Dendritic cell treated with granulocyte-macrophage colony-stimulating factor and Interleukin-4, amounts not matched to agents 40 ng/mL and 50 ng/mL, for 4 days (primary cell): ENCODE measurements at regions of chr3 and their contacts with region 1.

Region 1: GRCh38 chr3:193572426-193572908 is 17.8 kb upstream of the ATP13A4 start:
- H3K4me3 Mint-ChIP-seq: no peak overlapping the region
- H3K27ac Mint-ChIP-seq: no peak overlapping the region
- H3K4me1 Mint-ChIP-seq: peaks cover 5% of the 10 kb centered on the region
- H3K27me3 Mint-ChIP-seq: peaks cover 5% of the 10 kb centered on the region

Region 2: GRCh38 chr3:192467230-192468140 is 1105.0 kb before region 1 on chr3:
- intact Hi-C with region 1: loop called (anchors 5 kb)
- H3K4me3 Mint-ChIP-seq: no peak overlapping the region
- H3K27ac Mint-ChIP-seq: no peak overlapping the region
- H3K4me1 Mint-ChIP-seq: no peaks in the 10 kb centered on the region
- H3K27me3 Mint-ChIP-seq: peaks cover 4% of the 10 kb centered on the region

Region 3: GRCh38 chr3:192566706-192567290 is 1005.7 kb before region 1 on chr3:
- intact Hi-C with region 1: loop called (anchors 5 kb)
- H3K4me3 Mint-ChIP-seq: no peak overlapping the region
- H3K27ac Mint-ChIP-seq: no peak overlapping the region
- H3K4me1 Mint-ChIP-seq: peaks cover 10% of the 10 kb centered on the region
- H3K27me3 Mint-ChIP-seq: peaks cover 15% of the 10 kb centered on the region

Region 4: GRCh38 chr3:192816351-192816750 is 756.1 kb before region 1 on chr3:
- intact Hi-C with region 1: loop called (anchors 2 kb)
- H3K4me3 Mint-ChIP-seq: no peak overlapping the region
- H3K27ac Mint-ChIP-seq: no peak overlapping the region
- H3K4me1 Mint-ChIP-seq: peaks cover 34% of the 10 kb centered on the region
- H3K27me3 Mint-ChIP-seq: peaks cover 6% of the 10 kb centered on the region

Region 5: DNA sequence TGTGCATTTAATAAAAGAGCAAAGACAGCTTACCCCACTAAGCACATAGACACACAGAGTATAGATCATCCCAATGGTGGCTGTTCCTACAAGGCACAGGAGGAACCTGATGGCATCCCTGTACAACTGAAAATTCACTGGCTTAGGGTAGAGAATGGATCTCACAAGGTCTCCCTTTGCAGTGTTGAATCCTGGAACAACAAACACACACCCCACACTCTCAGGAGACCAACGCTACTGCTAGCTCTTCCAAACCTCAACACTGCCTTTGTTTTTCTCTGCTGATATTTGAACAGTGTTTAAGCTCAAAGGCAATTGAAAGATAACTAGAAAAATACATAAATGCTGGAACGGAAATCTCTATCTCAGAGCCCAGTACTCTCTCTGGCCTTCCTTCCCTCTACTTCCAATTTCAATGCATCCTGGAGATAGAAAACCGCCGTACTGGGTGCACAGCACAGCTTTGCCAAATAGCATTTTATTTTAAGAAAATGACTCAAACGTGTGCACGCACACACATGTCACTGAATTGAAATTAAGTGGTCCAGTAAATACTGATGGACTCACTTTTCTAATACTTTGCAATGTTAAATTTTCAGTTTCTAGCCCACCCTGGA is 106.4 kb before region 1 on chr3:
- intact Hi-C with region 1: loop called (anchors 1 kb)
- H3K4me3 Mint-ChIP-seq: no peak overlapping the region
- H3K27ac Mint-ChIP-seq: no peak overlapping the region
- H3K4me1 Mint-ChIP-seq: no peaks in the 10 kb centered on the region
- H3K27me3 Mint-ChIP-seq: no peaks in the 10 kb centered on the region